ENCODE measurements at regions of chr19 and their contacts with region 1.

Region 1: DNA sequence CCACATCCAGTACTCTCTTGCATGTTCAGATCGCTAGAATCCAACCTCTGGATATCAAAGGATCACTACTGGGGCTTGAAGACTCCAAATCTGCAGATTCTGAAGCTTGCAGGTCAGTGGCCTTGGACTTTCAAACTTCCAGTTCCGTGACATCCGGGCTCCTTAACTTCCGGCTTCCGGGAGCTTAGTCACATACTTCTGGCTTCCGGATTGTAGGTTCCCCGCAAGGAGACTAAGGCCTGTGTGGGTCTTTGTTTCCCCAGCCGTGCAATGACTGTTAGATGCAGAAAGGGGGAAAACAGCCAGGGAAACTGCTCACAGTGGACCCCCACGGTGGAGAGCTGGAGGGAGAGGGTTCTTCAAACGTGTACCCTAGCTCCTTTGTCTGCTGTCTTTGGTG is 41.4 kb downstream of the ZNF333 start:
- DNase-seq: no peak
- H3K27ac ChIP-seq: no peak overlapping the region
- CTCF ChIP-seq: no peak

Region 2: DNA sequence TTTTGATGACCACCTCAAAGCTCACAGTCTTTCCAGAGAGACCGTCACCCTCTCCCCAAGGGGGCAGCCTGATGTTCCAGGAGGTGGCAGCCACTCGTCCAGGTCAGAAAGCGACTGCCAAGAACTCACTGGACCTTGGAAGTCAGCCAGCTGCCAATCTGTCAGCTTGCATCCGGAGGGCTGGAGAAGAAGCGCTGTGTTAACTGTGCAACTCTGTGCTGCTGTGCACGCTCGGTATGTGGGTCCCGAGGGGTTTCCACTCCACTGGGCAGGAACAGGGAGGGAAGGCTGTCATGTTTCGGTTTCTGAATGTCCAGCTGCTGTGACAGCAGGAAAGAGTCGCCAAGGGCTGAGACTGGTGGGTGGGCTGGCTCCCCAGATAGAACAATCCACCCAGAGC is 1314.1 kb before region 1 on chr19:
- CTCF ChIA-PET with region 1: no interaction called
- POLR2A ChIA-PET with region 1: interaction called, 14 read pairs
- DNase-seq: no peak
- H3K27ac ChIP-seq: no peak overlapping the region
- CTCF ChIP-seq: no peak

Region 3: GRCh38 chr19:14915116-14915515 is 183.9 kb after region 1 on chr19:
- CTCF ChIA-PET with region 1: no interaction called
- POLR2A ChIA-PET with region 1: no interaction called
- DNase-seq: no peak
- H3K27ac ChIP-seq: no peak overlapping the region
- CTCF ChIP-seq: no peak